ENCODE measurements at regions of chr6 and their contacts with region 1.

Region 1: DNA sequence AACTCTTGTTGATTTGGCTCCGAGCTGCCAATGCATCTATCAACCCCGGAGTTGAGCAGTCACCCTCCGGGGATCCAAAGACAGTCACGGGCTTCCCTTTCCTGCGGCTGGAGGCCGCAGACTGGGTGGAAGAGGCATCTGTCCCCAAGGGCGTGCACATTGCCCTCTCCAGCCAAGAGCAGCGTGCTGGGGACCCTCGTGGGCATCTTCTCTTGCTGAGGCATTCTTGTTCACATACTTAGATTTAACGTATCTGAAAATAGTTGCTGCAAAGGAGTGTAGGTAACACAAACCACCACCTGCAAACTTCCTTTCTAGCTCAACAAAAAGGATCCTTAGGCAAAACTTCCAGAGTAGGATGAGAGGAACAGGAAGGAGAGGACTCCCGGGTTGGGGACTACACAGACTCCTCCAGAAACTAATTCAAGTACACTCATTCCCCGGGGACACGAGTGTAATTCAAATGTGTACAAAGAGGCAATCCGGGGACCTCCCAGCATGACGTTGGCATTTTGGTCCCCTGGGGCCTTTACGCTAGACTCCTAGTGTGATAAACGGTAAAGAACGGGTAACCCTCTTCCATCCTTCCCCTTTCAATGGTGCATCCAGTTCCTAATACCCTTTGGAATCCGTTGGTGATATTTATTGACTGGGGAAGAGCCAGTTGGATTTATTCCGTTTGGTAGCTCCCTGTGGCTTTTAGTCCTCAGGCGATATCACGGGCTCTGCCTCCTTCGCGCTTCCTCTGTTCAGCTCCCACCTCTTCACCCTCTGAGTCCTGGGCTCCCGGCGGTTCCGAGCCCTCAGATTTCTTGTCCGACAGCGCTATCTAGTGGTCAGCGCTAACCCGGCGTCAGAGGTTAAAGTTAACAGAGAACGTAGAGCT is 2.7 kb upstream of the COL12A1 start:
- DNase-seq: peak; percentile 92
- H3K4me3 ChIP-seq: peak overlapping the region; percentile 38 to 39
- H3K27ac ChIP-seq: peak overlapping the region; percentile 53 to 68
- H3K4me1 ChIP-seq: peaks cover 0 to 30% (median 8%) of the 10 kb centered on the region in 4 donors
- H3K27me3 ChIP-seq: no peaks in the 10 kb centered on the region
- CTCF ChIP-seq: peak; percentile 85 to 93

Region 2: GRCh38 chr6:73854998-73855718 is 1353.4 kb before region 1 on chr6:
- intact Hi-C with region 1: loop called (anchors 10 kb)
- DNase-seq: no peak
- H3K4me3 ChIP-seq: peak overlapping the region in 1 of 2 donors; percentile 33
- H3K27ac ChIP-seq: no peak overlapping the region
- H3K4me1 ChIP-seq: peaks cover 0 to 4% (median 0%) of the 10 kb centered on the region in 4 donors
- H3K27me3 ChIP-seq: no peaks in the 10 kb centered on the region
- CTCF ChIP-seq: peak; percentile 66 to 71

Region 3: GRCh38 chr6:74091136-74091793 is 1117.3 kb before region 1 on chr6:
- intact Hi-C with region 1: loop called (anchors 5 kb)
- DNase-seq: no peak
- H3K4me3 ChIP-seq: no peak overlapping the region
- H3K27ac ChIP-seq: no peak overlapping the region
- H3K4me1 ChIP-seq: peaks cover 0 to 3% (median 0%) of the 10 kb centered on the region in 4 donors
- H3K27me3 ChIP-seq: no peaks in the 10 kb centered on the region
- CTCF ChIP-seq: peak; percentile 59 to 62

Region 4: DNA sequence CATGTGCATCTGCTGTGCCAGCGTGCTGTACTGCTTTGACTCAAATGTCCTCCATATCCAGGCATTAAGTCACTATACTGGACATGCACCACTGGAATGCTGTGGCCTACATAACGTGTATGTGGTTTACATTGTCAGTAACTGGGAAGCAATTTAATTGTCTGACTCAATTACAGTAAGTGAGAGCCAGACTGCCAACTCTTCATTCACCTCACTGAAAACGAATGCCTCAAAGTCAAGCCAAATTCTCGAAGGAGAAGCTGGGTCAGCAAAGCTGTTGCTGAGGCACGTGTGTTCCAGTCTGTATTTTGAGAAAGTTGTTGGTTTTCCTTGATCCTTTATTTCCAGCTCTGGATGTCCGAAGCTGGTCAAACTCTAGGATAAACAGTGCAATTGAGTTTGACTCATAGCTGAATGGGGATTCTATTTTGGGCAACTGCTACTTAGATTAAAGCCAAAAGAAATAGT is 536.9 kb before region 1 on chr6:
- intact Hi-C with region 1: loop called (anchors 10 kb)
- DNase-seq: no peak
- H3K4me3 ChIP-seq: no peak overlapping the region
- H3K27ac ChIP-seq: peak overlapping the region; percentile 25 to 58
- H3K4me1 ChIP-seq: peaks cover 0 to 15% (median 8%) of the 10 kb centered on the region in 4 donors
- H3K27me3 ChIP-seq: no peaks in the 10 kb centered on the region
- CTCF ChIP-seq: no peak

Region 5: DNA sequence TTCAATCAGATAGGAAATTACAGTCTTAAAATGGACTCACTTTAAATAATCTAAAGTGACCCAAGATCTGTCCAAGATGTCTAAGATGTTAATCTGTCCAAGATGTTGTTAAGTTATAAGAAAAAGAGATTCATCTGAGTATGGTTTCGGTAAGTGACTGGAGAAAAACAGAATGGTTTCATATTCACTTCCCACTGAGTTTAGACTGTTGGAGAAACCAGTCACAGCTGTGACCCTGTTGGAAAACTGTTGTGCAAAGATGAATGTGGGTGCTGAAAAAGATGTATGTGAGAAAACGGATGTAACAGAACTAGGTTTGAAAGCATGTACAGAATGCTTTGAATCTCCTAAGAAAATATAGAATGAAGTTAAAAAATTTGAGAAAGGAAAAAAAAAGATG is 328.6 kb before region 1 on chr6:
- intact Hi-C with region 1: loop called (anchors 5 kb)
- DNase-seq: no peak
- H3K4me3 ChIP-seq: no peak overlapping the region
- H3K27ac ChIP-seq: peak overlapping the region in 1 of 2 donors; percentile 18
- H3K4me1 ChIP-seq: peaks cover 0 to 22% (median 0%) of the 10 kb centered on the region in 4 donors
- H3K27me3 ChIP-seq: no peaks in the 10 kb centered on the region
- CTCF ChIP-seq: no peak

Region 6: GRCh38 chr6:75167325-75167724 is 41.2 kb before region 1 on chr6:
- intact Hi-C with region 1: no loop called
- DNase-seq: no peak
- H3K4me3 ChIP-seq: no peak overlapping the region
- H3K27ac ChIP-seq: no peak overlapping the region
- H3K4me1 ChIP-seq: peaks cover 0 to 51% (median 15%) of the 10 kb centered on the region in 4 donors
- H3K27me3 ChIP-seq: no peaks in the 10 kb centered on the region
- CTCF ChIP-seq: no peak

Measured in tibial artery (tissue), 4 donors.